ENCODE measurements at regions of chr7 and their contacts with region 1.

Region 1: GRCh38 chr7:73316521-73316920 is 7.9 kb upstream of the NSUN5 start:
- DNase-seq: no peak
- ATAC-seq: peak; percentile 18; the same call in 2 of the 3 replicates
- H3K4me3 ChIP-seq: no peak overlapping the region
- H3K27ac ChIP-seq: no peak overlapping the region
- H3K4me1 ChIP-seq: peaks cover 0 to 14% of the 10 kb centered on the region in 2 experiments; a peak in 2 of 5 replicates
- H3K27me3 ChIP-seq: peaks cover 5 to 33% of the 10 kb centered on the region in 2 experiments; a peak in 3 of 5 replicates
- CTCF ChIP-seq: no peak
- EP300 ChIP-seq: no peak
- POLR2A ChIP-seq: no peak
- RAD21 ChIP-seq: no peak

Region 2: DNA sequence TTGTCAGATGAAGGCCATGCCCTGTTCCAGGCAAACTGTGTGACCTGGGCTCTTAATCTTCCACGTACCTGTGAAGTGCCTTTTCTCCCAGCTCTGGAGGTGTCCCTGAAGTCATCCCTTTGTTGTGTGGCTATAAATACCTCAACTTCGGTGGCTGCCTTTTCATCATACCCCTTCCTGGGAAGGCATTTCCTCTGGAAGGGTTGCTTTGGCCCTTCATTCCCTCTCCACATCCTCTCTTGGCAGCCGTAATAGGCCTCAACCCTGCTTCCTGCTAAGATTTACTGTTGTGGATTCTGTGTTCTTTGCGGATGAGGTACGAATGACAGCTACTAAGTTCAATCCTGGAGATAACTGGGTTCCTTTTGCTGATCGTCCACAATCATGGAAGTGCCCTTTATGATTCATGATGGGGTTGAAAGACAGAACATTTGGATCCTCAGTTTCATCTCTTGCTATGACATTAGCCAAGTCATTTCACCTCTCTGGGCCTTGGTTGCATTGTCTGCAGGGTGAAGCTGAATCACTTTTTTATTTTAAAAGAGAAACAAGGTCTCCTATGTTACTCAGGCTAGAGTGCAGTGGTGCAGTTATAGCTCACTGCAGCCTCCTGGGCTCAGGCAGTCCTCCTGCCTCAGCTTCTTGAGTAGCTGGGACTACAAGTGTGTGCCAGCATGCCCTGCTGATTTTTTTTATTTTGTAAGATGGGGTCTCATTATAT is 35.1 kb after region 1 on chr7:
- CTCF ChIA-PET with region 1: no interaction called
- POLR2A ChIA-PET with region 1: no interaction called
- in situ Hi-C with region 1: no loop called
- intact Hi-C with region 1: no loop called
- DNase-seq: no peak
- ATAC-seq: no peak
- H3K4me3 ChIP-seq: no peak overlapping the region
- H3K27ac ChIP-seq: no peak overlapping the region
- H3K4me1 ChIP-seq: peaks cover 0 to 4% of the 10 kb centered on the region in 2 experiments; a peak in 1 of 5 replicates
- H3K27me3 ChIP-seq: peaks cover 60 to 85% of the 10 kb centered on the region in 2 experiments
- CTCF ChIP-seq: no peak
- EP300 ChIP-seq: no peak
- POLR2A ChIP-seq: no peak
- RAD21 ChIP-seq: no peak

Region 3: DNA sequence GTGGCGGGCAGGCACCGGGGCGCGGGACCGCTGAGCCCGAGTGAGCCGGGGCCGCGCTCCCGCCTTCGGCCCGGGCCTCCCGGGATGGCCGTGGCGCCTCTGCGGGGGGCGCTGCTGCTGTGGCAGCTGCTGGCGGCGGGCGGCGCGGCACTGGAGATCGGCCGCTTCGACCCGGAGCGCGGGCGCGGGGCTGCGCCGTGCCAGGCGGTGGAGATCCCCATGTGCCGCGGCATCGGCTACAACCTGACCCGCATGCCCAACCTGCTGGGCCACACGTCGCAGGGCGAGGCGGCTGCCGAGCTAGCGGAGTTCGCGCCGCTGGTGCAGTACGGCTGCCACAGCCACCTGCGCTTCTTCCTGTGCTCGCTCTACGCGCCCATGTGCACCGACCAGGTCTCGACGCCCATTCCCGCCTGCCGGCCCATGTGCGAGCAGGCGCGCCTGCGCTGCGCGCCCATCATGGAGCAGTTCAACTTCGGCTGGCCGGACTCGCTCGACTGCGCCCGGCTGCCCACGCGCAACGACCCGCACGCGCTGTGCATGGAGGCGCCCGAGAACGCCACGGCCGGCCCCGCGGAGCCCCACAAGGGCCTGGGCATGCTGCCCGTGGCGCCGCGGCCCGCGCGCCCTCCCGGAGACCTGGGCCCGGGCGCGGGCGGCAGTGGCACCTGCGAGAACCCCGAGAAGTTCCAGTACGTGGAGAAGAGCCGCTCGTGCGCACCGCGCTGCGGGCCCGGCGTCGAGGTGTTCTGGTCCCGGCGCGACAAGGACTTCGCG is 117.6 kb after region 1 on chr7:
- CTCF ChIA-PET with region 1: no interaction called
- POLR2A ChIA-PET with region 1: interaction called, 4 read pairs
- in situ Hi-C with region 1: loop called (anchors 5 kb)
- intact Hi-C with region 1: loop called (anchors 5 kb)
- DNase-seq: peak in 1 of 4 experiments; percentile 41
- ATAC-seq: peak; percentile 31
- H3K4me3 ChIP-seq: peak overlapping the region; percentile 50
- H3K27ac ChIP-seq: peak overlapping the region; percentile 65; the same call in 1 of the 3 replicates
- H3K4me1 ChIP-seq: peaks cover 0 to 54% of the 10 kb centered on the region in 2 experiments; a peak in 2 of 5 replicates
- H3K27me3 ChIP-seq: no peaks in the 10 kb centered on the region
- CTCF ChIP-seq: peak in 1 of 3 experiments; percentile 7; a peak in 1 of 6 replicates
- EP300 ChIP-seq: no peak
- POLR2A ChIP-seq: no peak
- RAD21 ChIP-seq: no peak

Region 4: GRCh38 chr7:73451780-73452398 is 135.4 kb after region 1 on chr7:
- CTCF ChIA-PET with region 1: no interaction called
- POLR2A ChIA-PET with region 1: no interaction called
- in situ Hi-C with region 1: no loop called
- intact Hi-C with region 1: loop called (anchors 5 kb)
- DNase-seq: peak; percentile 69 to 74 (median 70)
- ATAC-seq: peak; percentile 86
- H3K4me3 ChIP-seq: no peak overlapping the region
- H3K27ac ChIP-seq: no peak overlapping the region
- H3K4me1 ChIP-seq: no peaks in the 10 kb centered on the region
- H3K27me3 ChIP-seq: no peaks in the 10 kb centered on the region
- CTCF ChIP-seq: peak; percentile 83 to 97 (median 95)
- EP300 ChIP-seq: no peak
- POLR2A ChIP-seq: no peak
- RAD21 ChIP-seq: peak; percentile 89 to 93

Measured in K562 (cell line).